Endothelial cell of umbilical vein (primary cell): ENCODE measurements at regions of chr16 and their contacts with region 1.

Region 1: DNA sequence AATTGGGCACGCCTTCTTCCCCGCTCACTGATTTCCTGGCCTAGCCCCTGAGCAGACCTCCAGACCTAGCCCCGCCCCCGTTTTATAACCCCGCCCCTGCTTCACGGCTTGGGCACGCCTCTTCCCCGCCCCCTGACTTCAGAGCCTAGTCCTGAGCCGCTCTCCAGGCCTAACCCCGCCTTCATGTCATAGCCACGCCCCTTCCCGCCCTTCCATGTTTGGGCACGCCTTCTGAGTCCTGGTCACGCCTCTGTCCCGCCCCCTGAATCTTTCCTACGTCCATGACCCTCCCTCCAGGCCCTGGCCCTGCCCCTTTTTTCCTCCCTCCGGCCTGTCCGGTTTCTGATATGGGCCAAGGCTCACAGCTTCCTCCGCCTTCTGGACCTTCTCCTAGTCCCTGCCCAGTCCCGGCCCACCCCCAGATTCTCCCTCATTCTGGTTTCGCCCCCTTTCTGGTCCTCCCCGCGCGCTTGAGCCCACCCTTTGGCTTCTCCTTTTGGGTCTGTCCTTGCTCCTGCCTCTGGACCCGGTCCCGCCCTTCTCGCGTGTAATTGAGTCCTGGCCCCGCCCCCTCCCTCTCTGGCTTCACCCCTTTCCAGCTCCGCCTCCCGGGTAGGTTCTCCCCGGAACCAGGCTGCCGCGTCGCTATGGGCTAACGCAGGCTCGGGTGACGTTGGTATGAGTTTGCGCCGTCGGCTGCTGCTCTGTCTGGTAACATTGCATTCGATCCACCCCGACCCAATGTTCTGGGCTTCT is 15.1 kb upstream of the EEF2K start:
- DNase-seq: peak; percentile 97
- H3K4me3 ChIP-seq: peak overlapping the region; percentile 21 to 80 (median 47)
- H3K27ac ChIP-seq: peak overlapping the region; percentile 99
- H3K4me1 ChIP-seq: peaks cover 45% of the 10 kb centered on the region
- H3K27me3 ChIP-seq: no peaks in the 10 kb centered on the region
- CTCF ChIP-seq: no peak
- POLR2A ChIP-seq: peak; percentile 28

Region 2: GRCh38 chr16:20900299-20901067 is 1290.5 kb before region 1 on chr16 and contains the starts of genes DCUN1D3 and LYRM1:
- CTCF ChIA-PET with region 1: no interaction called
- POLR2A ChIA-PET with region 1: interaction called, 3 read pairs
- dilution Hi-C with region 1: no loop called
- intact Hi-C with region 1: loop called (anchors 5 kb)
- DNase-seq: peak; percentile 99
- H3K4me3 ChIP-seq: peak within 1 kb of the TSS; percentile 56 to 96 (median 83)
- H3K27ac ChIP-seq: peak within 1 kb of the TSS; percentile 100
- H3K4me1 ChIP-seq: peaks cover 58% of the 10 kb centered on the region
- H3K27me3 ChIP-seq: no peaks in the 10 kb centered on the region
- CTCF ChIP-seq: no peak
- POLR2A ChIP-seq: peak; percentile 78
- total RNA-seq, gene DCUN1D3: 35.0 and 39.6 TPM in 2 replicates
- total RNA-seq, gene LYRM1: 28.4 and 29.1 TPM in 2 replicates

Region 3: GRCh38 chr16:21952793-21953540 is 238.0 kb before region 1 on chr16 and contains the start of gene UQCRC2:
- CTCF ChIA-PET with region 1: interaction called, 84 read pairs
- POLR2A ChIA-PET with region 1: interaction called, 5 read pairs
- dilution Hi-C with region 1: no loop called
- intact Hi-C with region 1: loop called (anchors 1 kb)
- DNase-seq: peak; percentile 94
- H3K4me3 ChIP-seq: peak within 1 kb of the TSS; percentile 53 to 92 (median 83)
- H3K27ac ChIP-seq: peak within 1 kb of the TSS; percentile 97
- H3K4me1 ChIP-seq: peaks cover 16% of the 10 kb centered on the region
- H3K27me3 ChIP-seq: no peaks in the 10 kb centered on the region
- CTCF ChIP-seq: no peak
- POLR2A ChIP-seq: peak; percentile 87
- total RNA-seq, gene UQCRC2: 189 and 207 TPM in 2 replicates

Region 4: DNA sequence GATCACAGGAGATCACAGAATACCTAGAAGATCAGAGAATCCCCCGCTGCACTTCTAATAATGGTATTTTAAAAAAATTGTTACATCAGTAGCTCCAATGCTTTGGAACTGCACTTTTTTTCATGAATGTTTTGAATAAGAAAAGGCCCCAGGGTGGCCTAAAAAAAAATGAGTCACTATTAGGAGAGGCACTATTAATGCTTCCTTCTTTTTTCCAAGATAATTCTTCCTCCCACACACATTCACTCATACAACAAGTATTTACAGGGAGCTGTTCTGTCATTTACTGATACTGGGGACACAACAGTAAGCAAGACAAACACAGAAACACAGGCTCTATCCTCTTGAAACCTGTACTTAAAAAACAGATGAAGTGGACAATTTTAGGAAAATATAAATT is 189.4 kb before region 1 on chr16:
- CTCF ChIA-PET with region 1: interaction called, 99 read pairs
- POLR2A ChIA-PET with region 1: no interaction called
- dilution Hi-C with region 1: no loop called
- intact Hi-C with region 1: loop called (anchors 1 kb)
- DNase-seq: no peak
- H3K4me3 ChIP-seq: no peak overlapping the region
- H3K27ac ChIP-seq: no peak overlapping the region
- H3K4me1 ChIP-seq: peaks cover 19% of the 10 kb centered on the region
- H3K27me3 ChIP-seq: no peaks in the 10 kb centered on the region
- CTCF ChIP-seq: no peak
- POLR2A ChIP-seq: no peak

Region 5: GRCh38 chr16:22077700-22078313 is 113.1 kb before region 1 on chr16:
- CTCF ChIA-PET with region 1: interaction called, 85 read pairs
- POLR2A ChIA-PET with region 1: no interaction called
- dilution Hi-C with region 1: no loop called
- intact Hi-C with region 1: loop called (anchors 1 kb)
- DNase-seq: peak; percentile 72
- H3K4me3 ChIP-seq: no peak overlapping the region
- H3K27ac ChIP-seq: no peak overlapping the region
- H3K4me1 ChIP-seq: peaks cover 28% of the 10 kb centered on the region
- H3K27me3 ChIP-seq: no peaks in the 10 kb centered on the region
- CTCF ChIP-seq: peak; percentile 76 to 77
- POLR2A ChIP-seq: no peak

Region 6: GRCh38 chr16:22174642-22175041 is 16.3 kb before region 1 on chr16:
- CTCF ChIA-PET with region 1: interaction called, 14 read pairs
- POLR2A ChIA-PET with region 1: no interaction called
- dilution Hi-C with region 1: no loop called
- intact Hi-C with region 1: no loop called
- DNase-seq: no peak
- H3K4me3 ChIP-seq: no peak overlapping the region
- H3K27ac ChIP-seq: no peak overlapping the region
- H3K4me1 ChIP-seq: no peaks in the 10 kb centered on the region
- H3K27me3 ChIP-seq: no peaks in the 10 kb centered on the region
- CTCF ChIP-seq: no peak
- POLR2A ChIP-seq: no peak

Region 7: GRCh38 chr16:23131931-23132621 is 941.1 kb after region 1 on chr16:
- CTCF ChIA-PET with region 1: no interaction called
- POLR2A ChIA-PET with region 1: no interaction called
- dilution Hi-C with region 1: no loop called
- intact Hi-C with region 1: loop called (anchors 5 kb)
- DNase-seq: peak; percentile 96
- H3K4me3 ChIP-seq: peak overlapping the region in 1 of 3 experiments; percentile 43
- H3K27ac ChIP-seq: peak overlapping the region; percentile 97
- H3K4me1 ChIP-seq: peaks cover 45% of the 10 kb centered on the region
- H3K27me3 ChIP-seq: no peaks in the 10 kb centered on the region
- CTCF ChIP-seq: no peak
- POLR2A ChIP-seq: peak; percentile 31